Lower leg skin (tissue), 4 donors: ENCODE measurements at regions of chr6 and their contacts with region 1.

Region 1: GRCh38 chr6:148959004-148959403 is 212.2 kb downstream of the UST start:
- DNase-seq: no peak
- H3K4me3 ChIP-seq: no peak overlapping the region
- CTCF ChIP-seq: no peak
- POLR2A ChIP-seq: no peak

Region 2: GRCh38 chr6:148578245-148578732 is 380.7 kb before region 1 on chr6:
- intact Hi-C with region 1: loop called (anchors 5 kb)
- DNase-seq: peak; percentile 76 to 94
- H3K4me3 ChIP-seq: no peak overlapping the region
- CTCF ChIP-seq: peak in 1 of 3 donors; percentile 58
- POLR2A ChIP-seq: no peak

Region 3: GRCh38 chr6:148736774-148737412 is 222.1 kb before region 1 on chr6:
- intact Hi-C with region 1: no loop called
- DNase-seq: no peak
- H3K4me3 ChIP-seq: no peak overlapping the region
- CTCF ChIP-seq: no peak
- POLR2A ChIP-seq: no peak

Region 4: GRCh38 chr6:148934539-148934938 is 24.5 kb before region 1 on chr6:
- intact Hi-C with region 1: loop called (anchors 1 kb)
- DNase-seq: peak in 1 of 2 donors; percentile 35
- H3K4me3 ChIP-seq: no peak overlapping the region
- CTCF ChIP-seq: no peak
- POLR2A ChIP-seq: no peak

Region 5: GRCh38 chr6:149284904-149285303 is 325.9 kb after region 1 on chr6:
- intact Hi-C with region 1: loop called (anchors 5 kb)
- DNase-seq: no peak
- H3K4me3 ChIP-seq: no peak overlapping the region
- CTCF ChIP-seq: no peak
- POLR2A ChIP-seq: no peak